ENCODE measurements at regions of chr6 and their contacts with region 1.

Region 1: GRCh38 chr6:40587240-40588069 is at the start of gene LRFN2:
- DNase-seq: peak; percentile 77 to 92 (median 90)
- H3K4me3 ChIP-seq: peak within 1 kb of the TSS; percentile 40 to 83 (median 66)
- H3K27ac ChIP-seq: no peak within 1 kb of the TSS
- H3K4me1 ChIP-seq: peaks cover 8 to 49% (median 39%) of the 10 kb centered on the region in 4 experiments
- H3K27me3 ChIP-seq: peaks cover 3 to 34% (median 18%) of the 10 kb centered on the region in 5 experiments

Region 2: GRCh38 chr6:39979461-39980328 is 607.8 kb before region 1 on chr6:
- CTCF ChIA-PET with region 1: no interaction called
- POLR2A ChIA-PET with region 1: no interaction called
- DNase-seq: no peak
- H3K4me3 ChIP-seq: no peak overlapping the region
- H3K27ac ChIP-seq: no peak overlapping the region
- H3K4me1 ChIP-seq: peaks cover 0 to 9% (median 0%) of the 10 kb centered on the region in 4 experiments
- H3K27me3 ChIP-seq: peaks cover 0 to 6% (median 0%) of the 10 kb centered on the region in 5 experiments

Region 3: GRCh38 chr6:40356242-40356910 is 231.1 kb before region 1 on chr6:
- CTCF ChIA-PET with region 1: no interaction called
- POLR2A ChIA-PET with region 1: no interaction called
- DNase-seq: no peak
- H3K4me3 ChIP-seq: no peak overlapping the region
- H3K27ac ChIP-seq: no peak overlapping the region
- H3K4me1 ChIP-seq: no peaks in the 10 kb centered on the region
- H3K27me3 ChIP-seq: peaks cover 0 to 5% (median 2%) of the 10 kb centered on the region in 5 experiments

Region 4: DNA sequence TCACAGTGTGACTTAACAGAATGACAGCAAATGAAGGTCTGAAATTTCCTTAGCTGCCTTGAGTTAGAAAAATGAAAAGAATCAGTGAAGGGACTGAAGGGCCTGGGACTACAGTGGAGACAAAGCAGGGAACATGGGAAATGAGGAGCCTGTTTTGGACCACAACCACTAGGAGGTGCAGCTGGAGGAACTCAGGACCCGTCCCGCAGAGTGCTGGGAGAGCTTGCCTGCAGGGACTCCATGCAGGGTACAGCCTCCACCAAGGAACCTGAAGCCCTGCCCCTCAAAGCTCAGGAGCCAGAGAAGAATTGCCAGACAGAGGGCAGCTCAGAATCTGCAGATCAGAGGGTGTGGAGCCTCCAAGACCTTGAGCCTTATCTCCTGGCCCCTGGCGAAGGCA is 51.0 kb before region 1 on chr6:
- CTCF ChIA-PET with region 1: interaction called, 11 read pairs
- POLR2A ChIA-PET with region 1: no interaction called
- DNase-seq: no peak
- H3K4me3 ChIP-seq: no peak overlapping the region
- H3K27ac ChIP-seq: no peak overlapping the region
- H3K4me1 ChIP-seq: peaks cover 0 to 16% (median 2%) of the 10 kb centered on the region in 4 experiments
- H3K27me3 ChIP-seq: no peaks in the 10 kb centered on the region

Region 5: GRCh38 chr6:40573221-40573620 is 14.2 kb before region 1 on chr6:
- CTCF ChIA-PET with region 1: interaction called, 15 read pairs
- POLR2A ChIA-PET with region 1: no interaction called
- DNase-seq: no peak
- H3K4me3 ChIP-seq: no peak overlapping the region
- H3K27ac ChIP-seq: no peak overlapping the region
- H3K4me1 ChIP-seq: peaks cover 0 to 4% (median 0%) of the 10 kb centered on the region in 4 experiments
- H3K27me3 ChIP-seq: no peaks in the 10 kb centered on the region

Region 6: GRCh38 chr6:40599555-40599954 is 12.1 kb after region 1 on chr6:
- CTCF ChIA-PET with region 1: interaction called, 17 read pairs
- POLR2A ChIA-PET with region 1: no interaction called
- DNase-seq: peak in 2 of 3 donors; percentile 52 to 64
- H3K4me3 ChIP-seq: no peak overlapping the region
- H3K27ac ChIP-seq: no peak overlapping the region
- H3K4me1 ChIP-seq: no peaks in the 10 kb centered on the region
- H3K27me3 ChIP-seq: peaks cover 4 to 78% (median 10%) of the 10 kb centered on the region in 5 experiments

Region 7: GRCh38 chr6:40611912-40612311 is 24.5 kb after region 1 on chr6:
- CTCF ChIA-PET with region 1: no interaction called
- POLR2A ChIA-PET with region 1: no interaction called
- DNase-seq: no peak
- H3K4me3 ChIP-seq: no peak overlapping the region
- H3K27ac ChIP-seq: no peak overlapping the region
- H3K4me1 ChIP-seq: peaks cover 0 to 2% (median 0%) of the 10 kb centered on the region in 4 experiments
- H3K27me3 ChIP-seq: peaks cover 0 to 7% (median 4%) of the 10 kb centered on the region in 5 experiments

Measured in common myeloid progenitor, CD34-positive (primary cell).